ENCODE measurements at regions of chr19 and their contacts with region 1.

Region 1: DNA sequence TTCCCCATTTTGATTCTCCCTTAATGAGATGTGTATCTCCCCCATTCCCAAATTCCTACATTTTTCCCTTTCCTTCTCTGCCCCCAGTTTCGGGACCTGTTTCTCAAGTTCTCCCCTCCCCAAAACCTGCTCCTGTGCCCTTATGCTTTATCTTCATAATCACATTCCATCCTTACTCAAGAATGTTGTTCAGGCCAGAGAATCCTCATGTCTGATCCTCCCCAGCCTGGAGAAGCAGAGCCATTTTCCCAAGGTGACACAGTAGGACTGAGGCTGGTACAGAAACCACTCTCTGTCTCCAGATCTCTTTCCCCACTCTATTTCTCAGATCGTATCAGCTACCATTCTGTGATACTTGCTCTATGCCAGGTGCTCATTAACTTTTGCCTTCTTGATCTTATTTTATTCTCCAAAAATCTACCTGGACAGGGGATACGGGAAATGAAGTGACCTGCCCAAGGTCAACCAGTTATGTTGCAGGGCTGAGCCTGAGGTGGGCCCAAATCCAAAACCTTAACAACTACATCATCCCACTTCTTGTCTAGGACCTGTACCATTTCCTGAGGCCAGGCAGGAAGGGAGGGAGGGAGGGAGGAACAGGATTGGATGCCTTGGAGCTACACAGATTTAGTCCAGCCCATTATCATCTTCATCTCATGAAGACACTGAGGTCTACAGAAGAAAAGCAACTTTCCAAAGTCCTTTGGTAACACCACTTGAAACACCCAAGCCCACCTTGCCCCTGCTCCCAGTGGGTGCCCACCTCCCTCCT is 10.6 kb downstream of the SMG9 start:
- DNase-seq: no peak
- H3K4me3 ChIP-seq: no peak overlapping the region
- H3K27ac ChIP-seq: peak overlapping the region; percentile 67 to 70
- H3K4me1 ChIP-seq: no peaks in the 10 kb centered on the region
- H3K27me3 ChIP-seq: no peaks in the 10 kb centered on the region
- CTCF ChIP-seq: no peak
- POLR2A ChIP-seq: no peak

Region 2: DNA sequence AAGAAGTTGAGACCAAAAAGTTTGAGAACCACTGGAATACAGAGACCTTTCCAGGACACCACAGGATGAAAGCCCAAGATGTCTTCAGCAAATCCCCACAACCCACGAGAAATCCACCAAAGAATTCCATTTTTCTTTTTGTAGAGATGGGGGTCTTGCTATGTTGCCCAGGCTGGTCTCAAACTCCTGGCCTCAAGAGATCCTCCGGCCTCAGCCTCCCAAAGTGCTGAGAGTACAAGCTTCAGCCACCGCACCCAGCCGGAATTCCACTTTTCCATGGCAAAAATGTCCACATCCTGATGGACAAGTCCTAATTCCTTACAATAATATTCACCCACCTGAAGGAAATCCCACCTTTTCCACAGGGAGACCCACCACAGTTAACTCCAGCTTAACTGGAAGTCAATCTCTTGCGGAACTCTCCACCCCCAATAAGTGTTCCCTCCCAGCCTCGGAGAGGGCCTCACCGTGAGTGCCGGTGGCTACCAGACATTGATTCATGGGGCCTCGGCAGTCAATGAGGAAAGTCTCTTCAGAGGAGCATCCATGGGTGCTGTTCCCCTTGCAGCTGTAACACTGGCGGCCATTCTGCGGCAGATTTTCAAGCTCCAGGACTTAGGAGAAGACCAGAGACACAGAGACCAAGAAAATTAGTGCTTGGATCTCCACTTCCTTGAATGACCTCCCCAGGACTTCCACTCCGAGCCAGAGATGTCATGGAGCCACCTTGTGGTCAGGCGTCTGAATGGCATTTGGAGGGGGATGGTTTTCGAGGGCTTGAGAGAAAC is 92.2 kb before region 1 on chr19:
- intact Hi-C with region 1: no loop called
- DNase-seq: peak; percentile 68
- H3K4me3 ChIP-seq: no peak overlapping the region
- H3K27ac ChIP-seq: peak overlapping the region in 1 of 2 donors; percentile 4
- H3K4me1 ChIP-seq: no peaks in the 10 kb centered on the region
- H3K27me3 ChIP-seq: no peaks in the 10 kb centered on the region
- CTCF ChIP-seq: peak; percentile 61 to 86 (median 75)
- POLR2A ChIP-seq: no peak

Region 3: GRCh38 chr19:43784981-43785808 is 41.0 kb after region 1 on chr19:
- intact Hi-C with region 1: loop called (anchors 2 kb)
- DNase-seq: peak; percentile 50
- H3K4me3 ChIP-seq: no peak overlapping the region
- H3K27ac ChIP-seq: peak overlapping the region in 1 of 2 donors; percentile 31
- H3K4me1 ChIP-seq: no peaks in the 10 kb centered on the region
- H3K27me3 ChIP-seq: no peaks in the 10 kb centered on the region
- CTCF ChIP-seq: peak; percentile 85 to 98 (median 92)
- POLR2A ChIP-seq: no peak

Region 4: GRCh38 chr19:43798546-43799409 is 54.6 kb after region 1 on chr19:
- intact Hi-C with region 1: no loop called
- DNase-seq: peak; percentile 74
- H3K4me3 ChIP-seq: peak overlapping the region; percentile 33 to 42
- H3K27ac ChIP-seq: peak overlapping the region; percentile 47 to 51
- H3K4me1 ChIP-seq: no peaks in the 10 kb centered on the region
- H3K27me3 ChIP-seq: no peaks in the 10 kb centered on the region
- CTCF ChIP-seq: no peak
- POLR2A ChIP-seq: peak; percentile 85

Region 5: DNA sequence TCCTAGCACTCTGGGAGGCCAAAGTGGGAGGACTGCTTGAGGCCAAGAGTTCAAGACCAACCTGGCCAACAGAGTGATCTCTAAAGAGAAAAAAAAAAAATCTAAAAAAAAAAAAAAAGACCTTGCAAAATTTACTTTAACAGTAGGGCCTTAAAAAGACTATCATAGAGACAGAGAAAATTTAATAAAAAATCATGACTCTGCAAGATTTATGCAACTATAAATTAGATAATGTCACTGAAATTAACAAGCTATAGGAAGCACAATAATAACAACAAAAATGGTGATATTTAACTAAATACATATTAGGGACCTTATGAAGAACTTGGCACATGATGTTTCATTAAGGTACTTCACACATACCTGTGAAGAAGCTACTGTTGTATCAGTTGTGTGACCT is 179.7 kb after region 1 on chr19:
- intact Hi-C with region 1: no loop called
- DNase-seq: no peak
- H3K4me3 ChIP-seq: no peak overlapping the region
- H3K27ac ChIP-seq: no peak overlapping the region
- H3K4me1 ChIP-seq: no peaks in the 10 kb centered on the region
- H3K27me3 ChIP-seq: no peaks in the 10 kb centered on the region
- CTCF ChIP-seq: no peak
- POLR2A ChIP-seq: no peak